GM10248 (cell line): ENCODE measurements at regions of chr1 and their contacts with region 1.

Region 1: DNA sequence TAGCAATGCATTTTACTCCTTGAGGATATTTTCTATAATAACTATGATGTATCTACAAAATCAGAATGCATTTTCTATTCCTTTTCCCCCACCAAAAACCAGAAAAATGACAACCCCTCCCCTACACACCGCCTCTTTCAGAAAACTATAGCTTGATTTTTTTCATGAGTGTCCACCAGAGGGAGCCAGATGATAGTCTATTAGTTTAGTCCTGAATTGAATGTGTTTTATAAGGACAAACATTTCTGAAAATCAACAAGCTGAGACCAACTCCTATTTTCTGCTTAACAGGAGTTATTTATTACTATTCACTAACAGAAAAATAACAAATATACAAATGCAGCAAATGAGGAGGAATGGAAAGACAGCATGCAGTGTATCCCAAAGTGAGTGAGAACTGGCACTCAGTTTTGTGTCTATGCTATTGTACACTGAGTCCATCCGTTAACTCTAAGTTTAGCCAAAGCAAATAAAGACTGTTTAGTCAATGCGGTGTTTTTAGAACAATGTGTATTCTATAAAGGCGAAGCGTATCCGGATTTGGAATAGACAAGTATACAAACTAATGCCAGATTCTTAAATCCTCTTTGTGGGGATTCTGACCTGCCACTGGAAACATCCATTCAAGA is 182.6 kb downstream of the VAV3 start:
- DNase-seq: no peak
- CTCF ChIP-seq: peak; percentile 48

Region 2: GRCh38 chr1:107795994-107796393 is 13.7 kb after region 1 on chr1:
- CTCF ChIA-PET with region 1: interaction called, 26 read pairs
- POLR2A ChIA-PET with region 1: no interaction called
- DNase-seq: no peak
- CTCF ChIP-seq: no peak

Region 3: GRCh38 chr1:107963601-107964335 is 181.4 kb after region 1 on chr1:
- CTCF ChIA-PET with region 1: interaction called, 11 read pairs
- POLR2A ChIA-PET with region 1: no interaction called
- DNase-seq: peak; percentile 54
- CTCF ChIP-seq: no peak

Region 4: DNA sequence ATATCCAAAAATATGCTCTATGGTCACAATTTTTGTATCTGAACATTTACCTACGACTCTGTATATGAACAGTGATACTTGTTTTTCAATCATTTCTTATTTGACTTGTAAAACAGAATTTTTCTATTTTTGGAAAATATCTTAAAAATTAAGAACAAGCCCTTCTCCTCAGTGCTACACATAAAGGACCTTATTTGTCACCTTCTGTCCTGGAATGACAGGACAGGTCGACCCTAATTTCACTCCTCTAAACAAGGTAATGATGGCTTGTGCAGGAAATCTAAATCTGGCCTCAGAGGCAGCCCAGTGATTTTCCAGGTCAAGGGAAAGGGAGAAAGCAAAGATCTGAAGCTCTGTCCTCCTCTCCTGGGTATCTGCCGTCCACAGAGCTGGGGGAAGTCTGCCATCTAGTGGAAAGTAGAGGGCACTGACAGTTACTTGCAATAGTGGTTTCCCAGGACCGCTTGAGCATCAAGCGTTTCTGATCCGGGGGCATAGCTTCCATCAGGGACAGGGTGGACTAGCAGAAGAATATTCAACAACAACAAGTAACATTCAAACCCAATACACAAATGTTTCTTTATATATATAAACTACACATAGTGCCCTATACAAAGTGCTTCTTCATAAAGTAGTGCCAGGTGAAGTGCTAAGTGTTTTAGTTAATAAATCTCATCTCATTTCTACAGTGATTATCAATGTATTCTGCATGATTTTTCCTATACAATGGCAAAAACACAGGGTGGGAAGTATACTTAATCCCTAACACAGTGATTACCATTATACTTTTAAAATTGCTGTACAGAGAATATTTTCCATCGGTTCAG is 343.2 kb after region 1 on chr1:
- CTCF ChIA-PET with region 1: interaction called, 509 read pairs
- POLR2A ChIA-PET with region 1: no interaction called
- DNase-seq: peak; percentile 71
- CTCF ChIP-seq: peak; percentile 85

Region 5: DNA sequence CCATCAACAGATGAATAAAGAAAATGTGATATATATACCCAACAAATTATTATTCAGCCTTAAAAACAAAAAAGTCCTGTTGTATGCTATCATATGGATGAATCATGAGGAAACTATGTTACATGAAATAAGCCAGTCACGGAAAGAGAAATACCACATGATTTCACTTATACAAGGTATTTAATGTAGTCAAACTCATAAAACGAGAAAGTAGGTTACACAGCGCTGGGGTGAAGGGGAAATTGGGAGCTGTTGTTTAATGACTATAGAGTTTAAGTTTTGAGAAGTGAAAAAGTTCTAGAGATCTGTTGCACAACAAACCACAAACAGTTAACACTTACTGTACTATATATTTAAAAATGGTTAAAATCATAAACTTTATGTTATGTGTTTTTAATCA is 359.3 kb after region 1 on chr1:
- CTCF ChIA-PET with region 1: interaction called, 18 read pairs
- POLR2A ChIA-PET with region 1: no interaction called
- DNase-seq: no peak
- CTCF ChIP-seq: no peak